Activated CD4-positive, alpha-beta T cell treated with anti-CD3 and anti-CD28 coated beads for 36 hours (primary cell): ENCODE measurements at regions of chr3 and their contacts with region 1.

Region 1: GRCh38 chr3:137807998-137808397 is 43.9 kb downstream of the SOX14 start:
- DNase-seq: no peak
- ATAC-seq: no peak
- H3K4me3 Mint-ChIP-seq: no peak overlapping the region
- H3K27ac Mint-ChIP-seq: no peak overlapping the region
- H3K4me1 Mint-ChIP-seq: no peaks in the 10 kb centered on the region
- H3K27me3 Mint-ChIP-seq: peaks cover 5% of the 10 kb centered on the region

Region 2: DNA sequence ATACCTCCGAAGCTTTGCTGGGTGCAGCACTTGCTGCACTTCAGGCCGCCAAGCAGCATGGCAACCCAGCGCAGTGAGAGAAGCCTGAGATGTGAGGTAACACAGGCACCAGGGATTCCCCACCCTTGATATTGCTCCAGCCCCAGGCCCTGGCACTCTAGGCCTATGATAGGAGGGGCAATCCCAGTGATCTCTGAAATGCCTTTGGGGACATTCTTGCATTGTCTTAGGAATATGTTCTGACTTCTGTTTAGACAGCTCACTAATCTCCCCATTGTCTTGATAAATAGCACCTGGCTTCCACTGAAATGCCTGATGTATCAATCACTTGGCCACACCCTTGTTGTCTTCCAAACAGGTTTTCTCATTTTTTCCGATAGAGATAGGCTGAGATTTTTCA is 58.9 kb after region 1 on chr3:
- CTCF ChIA-PET with region 1: no interaction called
- POLR2A ChIA-PET with region 1: no interaction called
- intact Hi-C with region 1: loop called in 1 of 2 experiments (anchors 10 kb)
- DNase-seq: no peak
- ATAC-seq: no peak
- H3K4me3 Mint-ChIP-seq: no peak overlapping the region
- H3K27ac Mint-ChIP-seq: no peak overlapping the region
- H3K4me1 Mint-ChIP-seq: no peaks in the 10 kb centered on the region
- H3K27me3 Mint-ChIP-seq: peaks cover 2% of the 10 kb centered on the region